ENCODE measurements at regions of chr18 and their contacts with region 1.

Region 1: GRCh38 chr18:61628085-61628484 is 264.7 kb downstream of the RNF152 start:
- DNase-seq: no peak
- H3K4me3 ChIP-seq: no peak overlapping the region
- H3K4me3 Mint-ChIP-seq: no peak overlapping the region
- H3K27ac Mint-ChIP-seq: no peak overlapping the region
- H3K4me1 ChIP-seq: no peaks in the 10 kb centered on the region
- H3K4me1 Mint-ChIP-seq: no peaks in the 10 kb centered on the region
- H3K27me3 ChIP-seq: no peaks in the 10 kb centered on the region
- H3K27me3 Mint-ChIP-seq: no peaks in the 10 kb centered on the region
- CTCF ChIP-seq: no peak

Region 2: DNA sequence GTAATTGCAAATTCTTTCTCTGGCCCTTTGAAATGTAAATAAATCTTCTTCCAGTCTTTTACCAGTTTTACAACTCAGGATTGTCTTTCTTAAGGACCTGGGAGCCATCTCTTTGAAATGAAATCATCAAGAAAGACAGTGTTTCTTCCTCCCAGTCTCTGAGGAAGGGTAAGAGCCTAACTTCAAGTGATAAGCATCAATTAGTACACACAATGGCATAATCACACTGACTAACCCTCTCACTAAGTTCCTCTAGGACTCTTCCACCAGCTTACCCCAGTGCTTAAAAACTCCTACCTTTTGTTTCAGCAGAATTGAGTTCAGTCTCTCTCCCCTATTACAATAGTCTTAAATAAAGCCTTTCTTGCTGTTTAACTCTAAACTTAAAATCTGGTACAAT is 353.5 kb before region 1 on chr18:
- CTCF ChIA-PET with region 1: no interaction called
- POLR2A ChIA-PET with region 1: no interaction called
- intact Hi-C with region 1: no loop called
- DNase-seq: no peak
- H3K4me3 ChIP-seq: no peak overlapping the region
- H3K4me3 Mint-ChIP-seq: no peak overlapping the region
- H3K27ac Mint-ChIP-seq: no peak overlapping the region
- H3K4me1 ChIP-seq: no peaks in the 10 kb centered on the region
- H3K4me1 Mint-ChIP-seq: no peaks in the 10 kb centered on the region
- H3K27me3 ChIP-seq: no peaks in the 10 kb centered on the region
- H3K27me3 Mint-ChIP-seq: no peaks in the 10 kb centered on the region
- CTCF ChIP-seq: no peak

Region 3: GRCh38 chr18:61581578-61582201 is 46.4 kb before region 1 on chr18:
- CTCF ChIA-PET with region 1: no interaction called
- POLR2A ChIA-PET with region 1: no interaction called
- intact Hi-C with region 1: loop called (anchors 5 kb)
- DNase-seq: peak; percentile 55 to 73
- H3K4me3 ChIP-seq: peak overlapping the region; percentile 28
- H3K4me3 Mint-ChIP-seq: peak overlapping the region; percentile 64
- H3K27ac Mint-ChIP-seq: peak overlapping the region; percentile 32
- H3K4me1 ChIP-seq: no peaks in the 10 kb centered on the region
- H3K4me1 Mint-ChIP-seq: no peaks in the 10 kb centered on the region
- H3K27me3 ChIP-seq: no peaks in the 10 kb centered on the region
- H3K27me3 Mint-ChIP-seq: no peaks in the 10 kb centered on the region
- CTCF ChIP-seq: peak; percentile 79 to 80

Measured in Caco-2 (cell line).